ENCODE measurements at regions of chr1 and their contacts with region 1.

Region 1: DNA sequence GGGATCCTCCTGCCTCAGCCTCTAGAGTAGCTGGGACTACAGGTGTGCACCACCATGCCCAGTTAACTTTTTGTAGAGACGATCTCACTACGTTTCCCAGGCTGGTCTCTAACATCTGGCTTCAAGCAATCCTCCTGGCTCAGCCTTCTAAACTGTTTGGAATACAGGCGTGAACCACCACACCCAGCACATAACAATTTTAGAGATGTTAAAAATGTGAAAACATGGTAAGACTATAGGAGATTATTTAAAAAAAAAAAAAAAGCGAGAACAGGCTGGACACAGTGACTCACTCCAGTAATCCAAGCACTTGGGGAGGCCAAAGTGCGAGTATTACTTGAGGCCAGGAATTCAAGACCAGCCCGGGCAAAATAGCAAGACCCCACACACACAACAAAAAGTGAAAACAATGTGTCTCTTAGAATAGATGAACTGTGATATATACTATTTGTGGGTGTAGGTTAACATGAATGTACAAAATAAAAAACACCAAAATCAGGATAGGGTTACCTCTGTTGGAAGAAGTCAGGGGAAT is 19.6 kb downstream of the CCDC18 start:
- DNase-seq: no peak
- H3K4me3 ChIP-seq: no peak overlapping the region
- H3K27ac ChIP-seq: no peak overlapping the region
- H3K4me1 ChIP-seq: no peaks in the 10 kb centered on the region
- H3K27me3 ChIP-seq: no peaks in the 10 kb centered on the region
- CTCF ChIP-seq: no peak
- EP300 ChIP-seq: no peak
- POLR2A ChIP-seq: no peak

Region 2: GRCh38 chr1:91245437-91245836 is 1954.7 kb before region 1 on chr1:
- intact Hi-C with region 1: loop called in 1 of 4 experiments (anchors 5 kb)
- DNase-seq: no peak
- H3K4me3 ChIP-seq: no peak overlapping the region
- H3K27ac ChIP-seq: no peak overlapping the region
- H3K4me1 ChIP-seq: no peaks in the 10 kb centered on the region
- H3K27me3 ChIP-seq: no peaks in the 10 kb centered on the region
- CTCF ChIP-seq: no peak
- EP300 ChIP-seq: no peak
- POLR2A ChIP-seq: no peak

Measured in ovary (tissue), 10 donors.